GM12878 (cell line): ENCODE measurements at regions of chr12 and their contacts with region 1.

Region 1: GRCh38 chr12:75480469-75480949 is at the start of gene GLIPR1:
- DNase-seq: peak; percentile 72
- ATAC-seq: peak; percentile 85
- H3K4me3 ChIP-seq: peak within 1 kb of the TSS; percentile 83
- H3K27ac ChIP-seq: peak within 1 kb of the TSS; percentile 88
- H3K4me1 ChIP-seq: peaks cover 28% of the 10 kb centered on the region
- H3K27me3 ChIP-seq: no peaks in the 10 kb centered on the region
- CTCF ChIP-seq: no peak
- EP300 ChIP-seq: no peak; a peak in 1 of 4 replicates
- POLR2A ChIP-seq: peak; percentile 91
- RAD21 ChIP-seq: no peak
- polyA plus RNA-seq, gene GLIPR1: 39.8 to 62.6 TPM

Region 2: DNA sequence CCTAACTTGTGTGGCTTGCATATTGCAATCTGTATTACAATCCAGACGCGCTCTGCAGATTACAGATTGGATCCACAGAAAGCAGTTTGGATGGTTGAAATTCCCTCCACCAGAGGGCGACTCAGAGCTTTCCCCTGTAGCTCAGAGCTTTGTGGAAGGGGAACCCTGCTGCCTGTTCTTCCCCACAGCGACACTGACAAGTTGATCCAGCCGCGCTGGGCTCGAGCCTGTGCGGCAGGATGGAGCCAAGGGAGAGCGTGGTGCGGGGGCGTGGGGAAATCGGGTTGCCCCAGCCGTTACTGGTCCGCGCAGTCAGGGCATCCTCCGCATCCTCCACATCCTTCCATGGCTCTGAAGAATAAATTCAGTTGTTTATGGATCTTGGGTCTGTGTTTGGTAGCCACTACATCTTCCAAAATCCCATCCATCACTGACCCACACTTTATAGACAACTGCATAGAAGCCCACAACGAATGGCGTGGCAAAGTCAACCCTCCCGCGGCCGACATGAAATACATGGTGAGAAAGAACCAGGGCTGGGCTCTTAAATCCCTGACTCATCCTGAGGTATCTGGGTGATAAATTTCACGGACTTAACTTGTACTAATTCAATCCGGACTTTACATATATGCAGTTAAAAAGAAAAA is 146.0 kb before region 1 on chr12 and contains the start of gene GLIPR1L1:
- CTCF ChIA-PET with region 1: interaction called, 98 read pairs
- POLR2A ChIA-PET with region 1: interaction called, 5 read pairs
- RAD21 ChIA-PET with region 1: interaction called, 63 read pairs
- SMC1A ChIA-PET with region 1: interaction called, 48 read pairs
- in situ Hi-C with region 1: no loop called
- intact Hi-C with region 1: loop called (anchors 2 kb)
- DNase-seq: peak; percentile 44
- ATAC-seq: peak; percentile 83
- H3K4me3 ChIP-seq: peak within 1 kb of the TSS; percentile 57; the same call in 1 of the 2 replicates
- H3K27ac ChIP-seq: no peak within 1 kb of the TSS
- H3K4me1 ChIP-seq: peaks cover 4% of the 10 kb centered on the region
- H3K27me3 ChIP-seq: no peaks in the 10 kb centered on the region
- CTCF ChIP-seq: peak; percentile 83 to 90 (median 89)
- EP300 ChIP-seq: no peak
- POLR2A ChIP-seq: no peak
- RAD21 ChIP-seq: peak; percentile 87
- polyA plus RNA-seq, gene GLIPR1L1: 0.10 to 0.13 TPM

Region 3: DNA sequence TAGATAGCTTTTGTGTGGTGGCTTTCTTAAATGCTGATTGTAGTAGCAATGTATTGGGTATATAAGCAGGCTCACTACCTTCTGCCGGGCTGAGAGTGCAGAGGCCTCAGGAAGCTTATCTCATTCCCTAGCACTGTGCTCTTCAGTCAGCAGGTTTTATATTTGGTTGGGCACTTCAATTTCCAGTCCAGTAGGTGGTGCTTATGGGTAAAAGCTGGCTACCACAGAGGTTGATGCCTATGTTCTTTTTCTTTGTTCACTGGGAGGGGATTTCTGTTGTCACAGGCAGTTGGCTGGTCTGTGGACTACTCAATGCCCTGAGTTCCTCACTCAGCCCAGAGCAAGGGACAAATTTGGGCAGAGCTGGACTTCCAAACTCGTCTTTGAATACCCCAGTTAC is 42.9 kb before region 1 on chr12:
- CTCF ChIA-PET with region 1: interaction called, 25 read pairs
- POLR2A ChIA-PET with region 1: interaction called, 8 read pairs
- RAD21 ChIA-PET with region 1: interaction called, 7 read pairs
- SMC1A ChIA-PET with region 1: interaction called, 21 read pairs
- in situ Hi-C with region 1: no loop called
- intact Hi-C with region 1: no loop called
- DNase-seq: no peak
- ATAC-seq: peak; percentile 93
- H3K4me3 ChIP-seq: no peak overlapping the region
- H3K27ac ChIP-seq: no peak overlapping the region
- H3K4me1 ChIP-seq: no peaks in the 10 kb centered on the region
- H3K27me3 ChIP-seq: no peaks in the 10 kb centered on the region
- CTCF ChIP-seq: peak; percentile 35 to 42 (median 41); a peak in 3 of 6 replicates
- EP300 ChIP-seq: no peak
- POLR2A ChIP-seq: no peak
- RAD21 ChIP-seq: peak; percentile 48

Region 4: GRCh38 chr12:75511116-75512048 is 30.9 kb after region 1 on chr12 and contains the start of gene KRR1:
- CTCF ChIA-PET with region 1: interaction called, 137 read pairs
- POLR2A ChIA-PET with region 1: interaction called, 11 read pairs
- RAD21 ChIA-PET with region 1: interaction called, 35 read pairs
- SMC1A ChIA-PET with region 1: interaction called, 58 read pairs
- in situ Hi-C with region 1: no loop called
- intact Hi-C with region 1: no loop called
- DNase-seq: peak; percentile 89
- ATAC-seq: peak; percentile 93
- H3K4me3 ChIP-seq: peak within 1 kb of the TSS; percentile 76
- H3K27ac ChIP-seq: peak within 1 kb of the TSS; percentile 85
- H3K4me1 ChIP-seq: no peaks in the 10 kb centered on the region; the same call in 1 of the 2 replicates
- H3K27me3 ChIP-seq: no peaks in the 10 kb centered on the region
- CTCF ChIP-seq: no peak
- EP300 ChIP-seq: no peak
- POLR2A ChIP-seq: peak; percentile 77
- RAD21 ChIP-seq: no peak
- polyA plus RNA-seq, gene KRR1: 74.4 to 81.0 TPM

Region 5: DNA sequence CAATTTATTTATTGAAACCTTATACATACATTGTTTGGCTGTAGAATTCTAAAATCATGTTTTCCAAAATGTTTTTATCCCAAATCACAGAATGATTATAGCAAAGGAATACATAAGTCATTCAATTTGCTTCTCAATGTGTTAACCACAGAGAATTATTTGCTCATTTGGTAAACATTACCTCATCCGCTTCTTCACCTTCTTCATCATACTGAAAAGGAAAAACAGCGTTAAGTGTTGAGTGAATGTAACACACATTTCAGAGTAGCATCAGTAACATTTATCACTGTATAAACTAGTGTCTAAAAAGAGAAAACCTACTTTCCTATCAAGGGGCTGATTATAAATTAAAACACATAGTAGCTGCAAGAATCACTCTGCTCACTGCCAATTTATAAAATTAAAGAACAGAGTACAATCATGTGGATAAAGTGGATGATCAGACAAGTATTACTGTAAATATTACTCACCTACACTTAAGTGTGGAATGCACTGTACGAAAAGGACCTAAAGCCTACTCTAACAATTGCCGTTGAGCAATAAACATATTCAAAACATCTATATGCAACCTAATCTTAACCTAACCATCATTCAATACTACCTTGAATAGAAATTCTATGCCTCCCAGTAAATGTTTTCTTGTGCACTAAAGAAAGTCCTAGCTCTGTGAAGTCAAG is 569.2 kb after region 1 on chr12:
- CTCF ChIA-PET with region 1: interaction called, 10 read pairs
- POLR2A ChIA-PET with region 1: no interaction called
- RAD21 ChIA-PET with region 1: interaction called, 5 read pairs
- SMC1A ChIA-PET with region 1: interaction called, 3 read pairs
- in situ Hi-C with region 1: no loop called
- intact Hi-C with region 1: no loop called
- DNase-seq: no peak
- ATAC-seq: no peak
- H3K4me3 ChIP-seq: no peak overlapping the region
- H3K27ac ChIP-seq: no peak overlapping the region
- H3K4me1 ChIP-seq: no peaks in the 10 kb centered on the region
- H3K27me3 ChIP-seq: no peaks in the 10 kb centered on the region
- CTCF ChIP-seq: no peak
- EP300 ChIP-seq: no peak
- POLR2A ChIP-seq: no peak
- RAD21 ChIP-seq: no peak

Region 6: DNA sequence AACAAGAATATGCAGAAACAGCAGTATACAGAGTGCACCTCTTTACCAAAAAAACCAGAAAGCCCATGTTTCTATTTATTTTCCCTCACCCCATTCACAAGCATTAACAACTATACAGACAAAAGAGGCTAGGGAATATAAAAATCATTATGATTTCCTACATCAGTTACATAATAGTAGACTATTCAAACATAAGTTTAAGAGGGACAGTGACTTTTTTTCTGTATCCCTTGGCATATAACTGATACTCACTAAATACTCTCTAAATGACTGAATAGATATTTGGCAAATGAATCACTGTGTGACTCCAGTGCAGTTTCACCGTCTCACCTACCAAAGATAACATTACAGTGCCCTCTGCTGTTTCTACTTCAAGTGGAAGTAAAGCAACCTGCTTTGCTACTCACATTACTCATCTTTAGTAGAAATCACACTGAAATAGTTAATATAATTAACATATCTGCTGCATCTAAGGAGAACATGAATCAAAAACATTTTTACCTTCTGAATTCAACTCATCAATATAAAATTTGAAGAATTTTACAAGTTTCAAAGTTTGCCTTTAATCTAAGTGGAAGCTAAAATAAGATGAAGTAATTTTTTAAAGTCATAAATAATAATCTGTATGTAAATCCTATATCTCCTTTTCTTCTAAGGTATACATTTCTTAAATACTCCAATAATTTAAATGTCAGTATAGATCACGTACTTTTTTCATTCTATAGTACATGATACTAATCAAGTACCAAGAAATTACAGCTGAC is 975.3 kb after region 1 on chr12:
- CTCF ChIA-PET with region 1: interaction called, 10 read pairs
- POLR2A ChIA-PET with region 1: no interaction called
- RAD21 ChIA-PET with region 1: interaction called, 8 read pairs
- SMC1A ChIA-PET with region 1: interaction called, 10 read pairs
- in situ Hi-C with region 1: no loop called
- intact Hi-C with region 1: no loop called
- DNase-seq: peak; percentile 33
- ATAC-seq: peak; percentile 99
- H3K4me3 ChIP-seq: no peak overlapping the region
- H3K27ac ChIP-seq: no peak overlapping the region
- H3K4me1 ChIP-seq: no peaks in the 10 kb centered on the region
- H3K27me3 ChIP-seq: no peaks in the 10 kb centered on the region
- CTCF ChIP-seq: peak; percentile 54 to 73 (median 71); a peak in 5 of 6 replicates
- EP300 ChIP-seq: no peak
- POLR2A ChIP-seq: no peak
- RAD21 ChIP-seq: peak; percentile 89